ENCODE measurements at regions of chrX and their contacts with region 1.

Region 1: DNA sequence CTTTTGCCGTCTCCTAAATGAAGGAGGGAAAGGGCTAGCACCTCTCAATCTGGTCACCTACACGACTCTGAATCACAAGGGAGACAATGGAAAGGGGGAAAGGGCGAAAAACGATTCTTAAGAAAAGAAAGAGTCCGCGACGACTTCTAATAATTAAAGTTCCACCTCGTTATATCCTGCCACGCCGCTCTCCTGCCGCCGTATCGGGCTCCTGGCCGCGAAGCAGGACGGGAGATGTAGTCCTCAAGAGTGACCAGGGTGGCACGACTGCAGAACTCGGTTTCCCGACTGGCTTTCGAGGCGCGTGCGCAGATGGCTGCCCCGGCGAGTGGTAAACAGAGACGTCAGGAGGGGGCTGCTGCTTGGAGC is at the start of gene FOXO4:
- DNase-seq: peak; percentile 84
- H3K4me3 Mint-ChIP-seq: peak within 1 kb of the TSS; percentile 94
- H3K27ac Mint-ChIP-seq: peak within 1 kb of the TSS; percentile 94
- H3K4me1 Mint-ChIP-seq: peaks cover 19% of the 10 kb centered on the region
- H3K27me3 Mint-ChIP-seq: no peaks in the 10 kb centered on the region
- total RNA-seq, gene FOXO4: 10.6 and 11.6 TPM in 2 replicates

Region 2: GRCh38 chrX:71068049-71068763 is 27.3 kb before region 1 on chrX and contains the start of gene SNX12:
- intact Hi-C with region 1: loop called (anchors 2 kb)
- DNase-seq: peak; percentile 87
- H3K4me3 Mint-ChIP-seq: peak within 1 kb of the TSS; percentile 99
- H3K27ac Mint-ChIP-seq: peak within 1 kb of the TSS; percentile 95
- H3K4me1 Mint-ChIP-seq: peaks cover 15% of the 10 kb centered on the region
- H3K27me3 Mint-ChIP-seq: peaks cover 9% of the 10 kb centered on the region
- total RNA-seq, gene SNX12: 49.9 and 50.1 TPM in 2 replicates

Region 3: GRCh38 chrX:71111141-71111843 is 15.8 kb after region 1 on chrX and contains the start of gene IL2RG:
- intact Hi-C with region 1: loop called (anchors 1 kb)
- DNase-seq: peak; percentile 74
- H3K4me3 Mint-ChIP-seq: peak within 1 kb of the TSS; percentile 100
- H3K27ac Mint-ChIP-seq: peak within 1 kb of the TSS; percentile 95
- H3K4me1 Mint-ChIP-seq: peaks cover 39% of the 10 kb centered on the region
- H3K27me3 Mint-ChIP-seq: no peaks in the 10 kb centered on the region
- total RNA-seq, gene IL2RG: 358 and 366 TPM in 2 replicates

Region 4: DNA sequence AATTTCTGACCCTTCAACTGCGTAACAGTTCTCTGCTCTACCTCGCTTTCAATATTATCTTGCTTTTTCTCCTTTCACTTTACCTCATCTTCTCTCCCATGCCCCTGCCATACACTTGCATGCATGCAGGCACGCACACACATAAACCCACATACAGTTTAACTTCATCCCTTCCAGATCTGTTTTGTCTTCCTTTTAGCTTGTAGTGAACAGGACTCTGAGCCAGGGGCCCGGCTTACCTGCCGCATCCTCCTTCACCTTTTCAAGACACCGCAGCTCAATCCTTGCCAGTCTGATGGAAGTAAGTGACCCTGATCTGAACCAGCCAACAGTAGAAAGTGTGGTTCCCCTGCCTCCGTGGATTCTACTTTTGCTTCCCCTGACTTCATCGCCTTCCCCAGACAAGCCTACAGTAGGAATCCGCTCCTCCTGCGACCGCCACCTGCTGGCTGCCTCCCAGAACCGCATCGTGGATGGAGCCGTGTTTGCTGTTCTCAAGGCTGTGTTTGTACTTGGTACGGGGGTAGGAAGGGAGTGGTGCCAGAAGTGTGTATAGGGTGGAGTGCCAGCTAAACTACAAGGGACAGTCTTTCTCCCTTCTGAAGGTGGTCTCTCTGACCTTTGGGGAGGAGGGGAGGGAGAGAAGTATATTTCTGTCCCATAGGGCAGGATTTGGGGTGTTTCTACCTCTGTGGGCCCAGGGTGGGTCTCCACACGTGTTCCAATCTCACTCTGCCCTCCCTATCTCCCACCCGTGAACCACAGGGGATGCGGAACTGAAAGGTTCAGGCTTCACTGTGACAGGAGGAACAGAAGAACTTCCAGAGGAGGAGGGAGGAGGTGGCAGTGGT is 33.6 kb after region 1 on chrX:
- intact Hi-C with region 1: loop called (anchors 1 kb)
- DNase-seq: peak; percentile 55
- H3K4me3 Mint-ChIP-seq: peak overlapping the region; percentile 58
- H3K27ac Mint-ChIP-seq: peak overlapping the region; percentile 82
- H3K4me1 Mint-ChIP-seq: peaks cover 11% of the 10 kb centered on the region
- H3K27me3 Mint-ChIP-seq: no peaks in the 10 kb centered on the region

Region 5: GRCh38 chrX:71143508-71143907 is 48.0 kb after region 1 on chrX:
- intact Hi-C with region 1: no loop called
- DNase-seq: no peak
- H3K4me3 Mint-ChIP-seq: no peak overlapping the region
- H3K27ac Mint-ChIP-seq: no peak overlapping the region
- H3K4me1 Mint-ChIP-seq: peaks cover 9% of the 10 kb centered on the region
- H3K27me3 Mint-ChIP-seq: no peaks in the 10 kb centered on the region

Measured in activated T-helper 2 cell treated with anti-CD3 and anti-CD28 coated beads, Interferon-gamma antibody, Interleukin-2, Interleukin-4, amounts not matched to agents 10 μg/mL and 5 μg/mL and 100 μg/mL, durations not matched to agents 14 hours and 24 hours and 36 hours (primary cell).